Mucosa of descending colon (tissue), 3 donors: ENCODE measurements at regions of chr12 and their contacts with region 1.

Region 1: GRCh38 chr12:106386813-106387535 is 29.4 kb downstream of the POLR3B start:
- DNase-seq: no peak
- ATAC-seq: no peak
- H3K4me3 ChIP-seq: no peak overlapping the region
- H3K4me1 ChIP-seq: no peaks in the 10 kb centered on the region
- CTCF ChIP-seq: no peak

Region 2: GRCh38 chr12:106919910-106920544 is 533.1 kb after region 1 on chr12:
- intact Hi-C with region 1: loop called (anchors 5 kb)
- DNase-seq: peak in 1 of 3 donors; percentile 53
- ATAC-seq: peak; percentile 39
- H3K4me3 ChIP-seq: no peak overlapping the region
- H3K4me1 ChIP-seq: no peaks in the 10 kb centered on the region
- CTCF ChIP-seq: peak; percentile 59